Lower leg skin (tissue), 4 donors: ENCODE measurements at regions of chr21 and their contacts with region 1.

Region 1: GRCh38 chr21:42164064-42164789 is 54.7 kb upstream of the ABCG1 start:
- DNase-seq: peak; percentile 53 to 91
- H3K4me3 ChIP-seq: no peak overlapping the region
- CTCF ChIP-seq: no peak
- POLR2A ChIP-seq: no peak

Region 2: DNA sequence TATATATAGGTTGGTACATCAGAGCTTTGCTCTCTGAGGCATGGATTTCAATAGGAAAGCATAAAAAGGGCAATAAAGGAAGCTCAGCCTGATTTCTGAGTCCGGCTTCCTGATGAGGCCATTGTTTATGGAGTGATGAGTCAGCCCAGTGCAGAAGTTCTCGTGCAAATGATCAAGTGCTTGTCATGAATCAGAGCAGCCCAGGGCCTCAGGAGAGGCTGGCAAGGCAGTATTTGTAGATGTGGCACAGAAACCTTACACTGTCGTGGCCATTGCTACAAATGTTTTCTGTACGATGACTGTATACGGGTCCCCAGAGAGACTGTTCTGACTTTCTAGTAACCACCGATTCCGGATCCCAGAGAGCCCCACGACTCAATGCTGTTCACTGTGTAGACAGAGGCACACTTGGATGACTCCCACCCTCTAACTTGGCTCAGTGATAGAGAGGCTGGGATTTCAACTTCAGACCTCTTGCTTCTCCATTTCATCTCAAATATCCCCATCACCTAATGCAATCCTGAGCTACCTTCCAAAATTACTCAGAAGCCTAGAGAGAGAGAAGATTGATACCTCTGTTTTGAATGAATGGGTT is 66.3 kb before region 1 on chr21:
- intact Hi-C with region 1: no loop called
- DNase-seq: peak; percentile 78 to 91
- H3K4me3 ChIP-seq: no peak overlapping the region
- CTCF ChIP-seq: no peak
- POLR2A ChIP-seq: no peak

Region 3: GRCh38 chr21:42218836-42219359 is 54.7 kb after region 1 on chr21 and contains the start of gene ABCG1:
- intact Hi-C with region 1: loop called (anchors 2 kb)
- DNase-seq: peak in 1 of 2 donors; percentile 93
- H3K4me3 ChIP-seq: peak within 1 kb of the TSS; percentile 86
- CTCF ChIP-seq: no peak
- POLR2A ChIP-seq: no peak
- total RNA-seq, gene ABCG1: 49.4 to 80.2 (median 52.7) TPM

Region 4: GRCh38 chr21:42299324-42300044 is 135.3 kb after region 1 on chr21:
- intact Hi-C with region 1: no loop called
- DNase-seq: no peak
- H3K4me3 ChIP-seq: no peak overlapping the region
- CTCF ChIP-seq: no peak
- POLR2A ChIP-seq: no peak